Dorsolateral prefrontal cortex (tissue), 120 donors: ENCODE measurements at regions of chr2 and their contacts with region 1.

Region 1: GRCh38 chr2:200901459-200902072 is 12.4 kb downstream of the NIF3L1 start:
- DNase-seq: peak in 4 of 10 donors; percentile 9 to 67 (median 26)
- H3K4me3 ChIP-seq: peak overlapping the region in 1 of 59 donors; percentile 5
- H3K27ac ChIP-seq: peak overlapping the region in 5 of 59 donors; percentile 10 to 33 (median 19)
- H3K27me3 ChIP-seq: no peaks in the 10 kb centered on the region
- CTCF ChIP-seq: peak; percentile 23 to 79 (median 70)

Region 2: DNA sequence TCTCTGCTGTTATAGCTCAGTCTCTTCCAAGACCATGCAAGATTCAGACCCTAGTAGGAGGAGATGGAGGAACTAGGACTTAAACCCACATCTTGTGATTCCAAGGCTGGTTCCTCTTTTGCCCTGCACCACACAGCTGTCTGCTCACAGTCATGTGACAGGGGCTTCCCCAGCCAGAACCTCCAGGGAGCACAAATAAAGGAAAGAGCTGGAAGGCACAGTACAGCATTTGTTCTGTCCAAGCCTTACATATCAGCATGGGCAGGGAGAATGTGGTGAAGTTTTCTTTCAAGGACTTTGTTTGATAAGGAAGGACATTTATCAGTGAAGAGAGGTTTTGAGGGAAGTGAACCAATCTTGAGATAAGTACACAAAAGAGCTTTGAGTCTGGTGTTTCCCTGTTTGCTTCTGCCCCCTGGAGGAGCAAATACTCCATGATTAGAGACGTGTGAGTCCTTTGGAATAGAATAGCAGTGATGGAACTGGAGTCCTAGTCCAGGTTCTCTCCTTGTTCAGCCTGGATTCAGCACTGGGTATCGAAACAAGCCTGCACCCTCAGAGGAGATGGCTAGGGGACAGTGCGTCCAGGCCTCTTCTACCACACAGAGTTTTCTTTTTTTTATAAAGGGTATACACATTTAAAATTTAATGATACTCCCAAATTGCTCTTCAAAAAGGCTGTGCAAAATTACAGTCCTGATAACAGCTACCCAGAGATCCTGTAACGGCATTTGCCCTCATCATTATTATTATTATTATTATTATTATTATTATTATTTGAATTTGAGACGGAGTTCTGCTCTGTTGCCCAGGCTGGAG is 256.8 kb after region 1 on chr2:
- intact Hi-C with region 1: loop called in 1 of 2 experiments (anchors 5 kb)
- DNase-seq: peak in 8 of 10 donors; percentile 29 to 85 (median 62)
- H3K4me3 ChIP-seq: peak overlapping the region in 14 of 59 donors; percentile 0 to 22 (median 12)
- H3K27ac ChIP-seq: peak overlapping the region; percentile 14 to 95 (median 85)
- H3K27me3 ChIP-seq: no peaks in the 10 kb centered on the region
- CTCF ChIP-seq: peak; percentile 35 to 88 (median 76)

Region 3: GRCh38 chr2:201180010-201180409 is 278.4 kb after region 1 on chr2:
- intact Hi-C with region 1: loop called (anchors 1 to 5 kb)
- DNase-seq: no peak
- H3K4me3 ChIP-seq: no peak overlapping the region
- H3K27ac ChIP-seq: no peak overlapping the region
- H3K27me3 ChIP-seq: no peaks in the 10 kb centered on the region
- CTCF ChIP-seq: no peak